AG04450 (cell line): ENCODE measurements at regions of chr9 and their contacts with region 1.

Region 1: DNA sequence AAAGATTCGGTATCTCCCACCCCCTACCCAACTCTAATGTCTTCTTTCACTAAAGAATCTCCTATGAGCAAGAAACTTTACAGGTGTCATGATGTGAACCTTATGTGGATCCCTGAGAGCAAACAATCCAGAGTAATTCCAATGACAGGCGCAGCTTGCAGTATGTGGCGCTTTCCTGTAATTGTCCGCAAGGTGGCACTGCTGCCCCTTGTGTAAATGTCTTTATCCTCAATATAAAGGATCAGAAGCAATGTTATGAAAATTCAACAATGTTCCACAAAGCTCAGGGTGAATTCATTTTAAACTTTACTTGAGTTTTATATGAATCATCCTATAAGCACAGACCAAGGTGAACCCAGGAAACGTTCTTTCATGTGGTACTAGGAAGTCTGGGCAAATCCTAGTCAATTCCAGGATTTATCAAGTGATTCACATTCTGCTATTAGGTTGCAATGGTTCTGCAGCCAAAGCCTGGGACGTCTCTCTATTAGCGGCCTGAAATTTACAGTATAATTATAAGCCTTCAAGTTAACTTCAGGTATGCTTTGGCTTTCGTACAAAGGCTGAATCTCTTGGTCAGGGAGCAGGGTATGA is 113.7 kb downstream of the TRPM6 start:
- DNase-seq: peak; percentile 55
- H3K4me3 ChIP-seq: no peak overlapping the region
- H3K27ac ChIP-seq: no peak overlapping the region
- H3K27me3 ChIP-seq: no peaks in the 10 kb centered on the region
- CTCF ChIP-seq: peak; percentile 95

Region 2: GRCh38 chr9:74760031-74760698 is 13.8 kb before region 1 on chr9:
- CTCF ChIA-PET with region 1: interaction called, 39 read pairs
- POLR2A ChIA-PET with region 1: no interaction called
- DNase-seq: peak; percentile 73
- H3K4me3 ChIP-seq: no peak overlapping the region
- H3K27ac ChIP-seq: no peak overlapping the region
- H3K27me3 ChIP-seq: no peaks in the 10 kb centered on the region
- CTCF ChIP-seq: no peak

Region 3: GRCh38 chr9:74952281-74953151 is 178.5 kb after region 1 on chr9 and contains the start of gene C9orf40:
- CTCF ChIA-PET with region 1: interaction called, 26 read pairs
- POLR2A ChIA-PET with region 1: no interaction called
- DNase-seq: peak; percentile 42
- H3K4me3 ChIP-seq: peak within 1 kb of the TSS; percentile 95
- H3K27ac ChIP-seq: peak within 1 kb of the TSS; percentile 67
- H3K27me3 ChIP-seq: no peaks in the 10 kb centered on the region
- CTCF ChIP-seq: peak; percentile 77
- polyA plus RNA-seq, gene C9orf40: 1.3 and 2.3 TPM in 2 replicates

Region 4: DNA sequence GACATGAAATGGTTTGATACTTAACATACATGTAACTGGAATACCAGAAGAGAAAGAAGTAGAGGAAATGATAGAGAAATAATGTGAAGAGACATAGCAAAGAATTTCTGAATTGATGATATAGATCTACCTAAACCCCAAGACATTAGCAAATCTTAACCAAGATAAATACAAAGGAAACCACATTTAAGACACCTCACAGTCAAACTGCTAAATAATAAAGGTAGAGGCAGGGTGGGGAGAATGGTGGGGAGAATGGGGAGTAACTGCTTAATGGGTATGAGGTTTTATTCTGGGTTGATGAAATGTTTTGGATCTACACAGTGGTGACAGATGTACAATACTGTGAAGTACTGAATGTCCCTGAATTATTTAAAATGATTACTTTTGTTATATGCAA is 236.6 kb after region 1 on chr9:
- CTCF ChIA-PET with region 1: interaction called, 34 read pairs
- POLR2A ChIA-PET with region 1: no interaction called
- DNase-seq: no peak
- H3K4me3 ChIP-seq: no peak overlapping the region
- H3K27ac ChIP-seq: no peak overlapping the region
- H3K27me3 ChIP-seq: no peaks in the 10 kb centered on the region
- CTCF ChIP-seq: no peak

Region 5: GRCh38 chr9:75064307-75065025 is 290.5 kb after region 1 on chr9:
- CTCF ChIA-PET with region 1: interaction called, 75 read pairs
- POLR2A ChIA-PET with region 1: no interaction called
- DNase-seq: no peak
- H3K4me3 ChIP-seq: no peak overlapping the region
- H3K27ac ChIP-seq: no peak overlapping the region
- H3K27me3 ChIP-seq: no peaks in the 10 kb centered on the region
- CTCF ChIP-seq: no peak

Region 6: GRCh38 chr9:75086853-75087677 is 313.1 kb after region 1 on chr9:
- CTCF ChIA-PET with region 1: interaction called, 42 read pairs
- POLR2A ChIA-PET with region 1: no interaction called
- DNase-seq: no peak
- H3K4me3 ChIP-seq: peak overlapping the region; percentile 98
- H3K27ac ChIP-seq: peak overlapping the region; percentile 57
- H3K27me3 ChIP-seq: no peaks in the 10 kb centered on the region
- CTCF ChIP-seq: no peak

Region 7: DNA sequence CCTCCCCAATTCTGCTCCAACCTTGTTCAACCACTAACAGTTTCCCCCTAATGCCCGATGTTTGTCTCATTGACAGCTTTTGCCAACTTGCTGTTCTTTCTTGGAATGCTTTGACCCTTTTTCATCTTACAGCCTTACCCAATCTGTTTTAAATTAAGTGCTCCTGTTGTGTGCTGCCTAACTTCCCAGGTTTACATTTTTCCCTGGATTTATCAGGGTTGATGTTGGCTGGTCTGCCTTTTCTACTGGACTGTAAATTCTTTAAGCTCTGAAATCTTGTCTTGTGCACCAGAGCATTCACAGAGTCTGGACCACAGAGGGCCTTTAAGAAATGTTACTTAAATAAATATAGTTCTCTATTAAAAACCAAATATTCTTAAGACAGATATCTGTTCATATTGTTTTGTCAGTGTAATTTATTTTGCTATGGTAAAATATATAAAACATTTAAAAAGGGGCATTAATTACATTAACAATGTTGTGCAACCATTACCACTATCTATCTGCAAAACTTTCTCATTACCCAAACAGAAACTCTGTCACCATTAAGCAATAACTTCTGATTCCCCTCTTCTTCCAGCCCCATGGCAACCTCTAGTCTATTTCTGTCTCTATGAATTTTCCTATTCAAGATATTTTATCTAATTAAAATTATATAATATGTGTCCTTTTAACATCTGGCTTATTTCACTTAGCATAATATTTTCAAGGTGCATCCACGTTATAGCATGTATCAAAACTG is 387.3 kb after region 1 on chr9:
- CTCF ChIA-PET with region 1: no interaction called
- POLR2A ChIA-PET with region 1: no interaction called
- DNase-seq: no peak
- H3K4me3 ChIP-seq: no peak overlapping the region
- H3K27ac ChIP-seq: no peak overlapping the region
- H3K27me3 ChIP-seq: no peaks in the 10 kb centered on the region
- CTCF ChIP-seq: no peak